CD8-positive, alpha-beta T cell (primary cell): ENCODE measurements at regions of chr1 and their contacts with region 1.

Region 1: DNA sequence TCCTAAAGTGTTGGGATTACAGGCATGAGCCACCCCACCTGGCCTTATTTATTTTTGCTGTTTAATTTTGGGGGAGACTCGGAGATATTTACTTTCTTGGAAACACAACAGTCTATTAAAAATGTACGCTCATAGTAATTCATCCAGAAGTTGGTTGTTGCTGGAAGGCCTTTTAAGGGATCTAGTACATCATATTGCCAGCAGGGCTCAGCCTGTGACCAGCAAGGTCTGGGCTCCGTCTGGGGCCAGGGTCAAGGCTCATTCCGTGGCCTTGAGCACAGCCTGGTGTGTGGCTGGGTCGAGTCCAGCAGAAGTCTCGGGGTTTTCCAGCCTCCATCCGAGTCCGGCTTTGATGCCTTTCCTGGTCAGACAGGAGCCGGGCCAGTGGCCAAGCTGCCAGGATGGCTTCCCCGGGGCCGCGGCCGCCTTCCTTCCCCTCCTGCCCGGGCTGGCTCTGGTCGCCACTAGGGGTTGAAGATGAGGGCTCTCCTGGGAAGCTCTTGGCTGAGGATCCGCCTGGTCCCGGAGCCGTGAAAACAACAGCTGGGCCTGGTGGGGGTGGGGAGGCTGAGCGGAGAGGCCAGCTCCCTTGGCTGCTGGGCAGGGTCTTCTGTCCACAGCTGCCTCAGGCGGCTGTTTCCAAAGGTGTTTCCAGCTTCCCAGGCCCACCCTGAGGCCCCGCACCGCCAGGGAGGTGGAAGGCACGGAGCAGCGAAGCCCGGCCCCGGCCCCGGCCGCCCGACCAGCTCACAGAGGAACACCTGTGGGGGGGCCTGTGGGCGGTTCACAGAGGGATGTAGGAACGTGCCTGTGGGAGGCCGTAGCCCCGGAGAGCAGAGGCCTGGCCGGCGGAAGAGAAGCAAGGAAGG is 5.1 kb upstream of the VWA1 start:
- DNase-seq: peak in 1 of 9 experiments; percentile 5
- ATAC-seq: no peak
- H3K4me3 ChIP-seq: no peak overlapping the region
- H3K4me3 Mint-ChIP-seq: no peak overlapping the region
- H3K27ac ChIP-seq: no peak overlapping the region
- H3K27ac Mint-ChIP-seq: no peak overlapping the region
- H3K4me1 ChIP-seq: peaks cover 17% of the 10 kb centered on the region
- H3K4me1 Mint-ChIP-seq: peaks cover 8% of the 10 kb centered on the region
- H3K27me3 ChIP-seq: peaks cover 13 to 31% of the 10 kb centered on the region in 2 experiments
- H3K27me3 Mint-ChIP-seq: peaks cover 27% of the 10 kb centered on the region
- CTCF ChIP-seq: no peak

Region 2: GRCh38 chr1:1441002-1441888 is 10.9 kb after region 1 on chr1:
- CTCF ChIA-PET with region 1: interaction called, 17 read pairs
- POLR2A ChIA-PET with region 1: no interaction called
- intact Hi-C with region 1: no loop called
- DNase-seq: peak; percentile 22 to 74 (median 59)
- ATAC-seq: peak; percentile 94
- H3K4me3 ChIP-seq: no peak overlapping the region
- H3K4me3 Mint-ChIP-seq: no peak overlapping the region
- H3K27ac ChIP-seq: no peak overlapping the region
- H3K27ac Mint-ChIP-seq: no peak overlapping the region
- H3K4me1 ChIP-seq: peaks cover 9% of the 10 kb centered on the region
- H3K4me1 Mint-ChIP-seq: peaks cover 5% of the 10 kb centered on the region
- H3K27me3 ChIP-seq: peaks cover 12 to 16% of the 10 kb centered on the region in 2 experiments
- H3K27me3 Mint-ChIP-seq: peaks cover 10% of the 10 kb centered on the region
- CTCF ChIP-seq: peak; percentile 85

Region 3: DNA sequence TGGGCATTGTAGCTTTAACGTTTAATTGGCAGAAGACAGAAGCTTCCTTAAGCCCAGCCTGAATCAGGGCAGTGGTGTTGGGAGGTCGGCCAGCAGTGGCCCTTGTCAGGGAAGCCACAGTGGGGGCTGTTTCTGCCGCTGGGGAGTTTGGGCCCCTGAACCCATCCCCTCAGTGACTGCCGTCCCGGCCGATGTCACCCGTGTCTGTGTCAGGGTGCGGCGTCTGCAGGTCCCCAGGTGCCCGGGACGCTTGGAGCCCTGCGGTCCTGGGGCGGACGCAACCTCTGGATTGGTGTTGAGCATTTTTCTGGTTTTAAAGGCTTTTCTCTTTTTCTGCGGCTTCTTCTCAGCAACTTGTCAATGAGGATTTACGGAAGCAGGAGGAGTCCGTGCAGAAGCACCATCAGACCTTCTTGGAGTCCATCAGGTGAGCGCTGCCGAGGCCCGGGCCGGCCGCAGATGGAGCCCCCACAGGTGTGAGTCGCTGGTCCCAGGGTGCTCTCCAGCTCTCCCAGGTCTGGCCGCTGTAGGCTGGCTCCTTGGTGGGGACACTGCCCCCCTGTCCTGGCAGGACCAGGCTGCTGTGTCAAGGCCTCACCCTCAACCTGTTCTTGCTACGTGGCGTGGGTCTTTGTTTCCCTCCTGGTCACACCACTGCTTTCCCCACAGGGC is 21.5 kb after region 1 on chr1:
- CTCF ChIA-PET with region 1: no interaction called
- POLR2A ChIA-PET with region 1: no interaction called
- intact Hi-C with region 1: no loop called
- DNase-seq: no peak
- ATAC-seq: no peak
- H3K4me3 ChIP-seq: no peak overlapping the region
- H3K4me3 Mint-ChIP-seq: no peak overlapping the region
- H3K27ac ChIP-seq: no peak overlapping the region
- H3K27ac Mint-ChIP-seq: no peak overlapping the region
- H3K4me1 ChIP-seq: no peaks in the 10 kb centered on the region
- H3K4me1 Mint-ChIP-seq: no peaks in the 10 kb centered on the region
- H3K27me3 ChIP-seq: no peaks in the 10 kb centered on the region
- H3K27me3 Mint-ChIP-seq: no peaks in the 10 kb centered on the region
- CTCF ChIP-seq: no peak